Aorta (tissue), 5 donors: ENCODE measurements at regions of chr2 and their contacts with region 1.

Region 1: DNA sequence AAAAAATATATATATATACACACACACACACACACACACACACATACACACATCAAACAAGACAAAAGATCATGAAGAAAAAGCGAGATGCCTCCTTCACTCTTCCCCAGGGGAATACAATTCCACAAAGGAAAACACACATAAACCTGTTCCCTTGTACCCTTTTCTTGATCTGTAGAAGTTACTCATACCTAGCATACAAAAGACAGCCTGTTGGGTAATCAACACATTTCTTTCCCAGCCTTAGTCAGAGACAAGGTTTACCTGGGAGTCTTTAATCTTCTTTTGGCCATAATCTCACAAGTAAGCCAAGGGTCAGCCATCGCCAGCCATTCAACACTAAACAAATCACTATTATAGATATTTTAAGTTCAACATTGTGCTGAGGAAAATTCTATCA is 407.0 kb downstream of the SUCLG1 start:
- DNase-seq: no peak
- ATAC-seq: no peak
- H3K4me3 ChIP-seq: no peak overlapping the region
- H3K27ac ChIP-seq: no peak overlapping the region
- H3K4me1 ChIP-seq: no peaks in the 10 kb centered on the region
- H3K27me3 ChIP-seq: no peaks in the 10 kb centered on the region

Region 2: DNA sequence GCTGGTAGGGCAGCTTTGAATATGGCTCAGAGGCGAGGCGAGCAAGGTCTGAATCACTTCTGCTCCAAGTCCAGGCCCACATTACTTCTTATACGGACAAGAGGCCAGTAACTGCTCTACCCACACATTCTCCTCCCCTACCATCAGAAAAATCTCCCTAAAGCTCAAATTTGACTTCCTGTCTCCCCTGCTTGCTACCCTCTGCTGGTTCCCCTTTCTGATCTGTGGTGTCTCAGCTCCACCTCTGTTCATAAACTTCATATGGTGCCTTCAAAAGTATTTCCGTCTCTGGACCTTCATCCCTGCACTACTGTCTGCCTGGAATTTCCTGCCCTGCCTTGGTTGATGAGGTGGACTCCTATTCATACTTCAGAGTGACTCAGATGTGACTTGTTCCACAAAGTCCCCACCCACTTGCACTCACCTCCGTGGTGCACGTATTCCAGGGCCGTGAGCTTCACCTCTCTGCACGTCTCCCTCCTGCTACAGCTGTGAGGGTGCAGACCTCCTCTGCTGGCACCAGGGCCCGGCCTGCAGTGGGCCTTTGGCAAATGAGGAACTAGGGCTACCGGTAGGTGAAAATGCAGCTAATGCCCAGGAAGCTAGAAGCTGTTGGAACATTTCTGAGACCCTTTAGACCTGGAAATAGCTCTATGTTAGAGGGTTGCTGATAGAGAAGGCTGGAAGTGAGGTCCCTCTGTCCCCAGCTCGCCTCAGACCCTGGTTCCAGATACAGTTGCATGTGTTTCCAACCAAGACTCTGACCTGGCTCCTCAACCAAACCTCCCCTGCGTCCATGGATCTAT is 894.4 kb after region 1 on chr2:
- intact Hi-C with region 1: loop called in 1 of 2 experiments (anchors 10 kb)
- DNase-seq: peak in 1 of 2 donors; percentile 54
- ATAC-seq: no peak
- H3K4me3 ChIP-seq: no peak overlapping the region
- H3K27ac ChIP-seq: no peak overlapping the region
- H3K4me1 ChIP-seq: no peaks in the 10 kb centered on the region
- H3K27me3 ChIP-seq: no peaks in the 10 kb centered on the region